B cell (primary cell): ENCODE measurements at regions of chr9 and their contacts with region 1.

Region 1: DNA sequence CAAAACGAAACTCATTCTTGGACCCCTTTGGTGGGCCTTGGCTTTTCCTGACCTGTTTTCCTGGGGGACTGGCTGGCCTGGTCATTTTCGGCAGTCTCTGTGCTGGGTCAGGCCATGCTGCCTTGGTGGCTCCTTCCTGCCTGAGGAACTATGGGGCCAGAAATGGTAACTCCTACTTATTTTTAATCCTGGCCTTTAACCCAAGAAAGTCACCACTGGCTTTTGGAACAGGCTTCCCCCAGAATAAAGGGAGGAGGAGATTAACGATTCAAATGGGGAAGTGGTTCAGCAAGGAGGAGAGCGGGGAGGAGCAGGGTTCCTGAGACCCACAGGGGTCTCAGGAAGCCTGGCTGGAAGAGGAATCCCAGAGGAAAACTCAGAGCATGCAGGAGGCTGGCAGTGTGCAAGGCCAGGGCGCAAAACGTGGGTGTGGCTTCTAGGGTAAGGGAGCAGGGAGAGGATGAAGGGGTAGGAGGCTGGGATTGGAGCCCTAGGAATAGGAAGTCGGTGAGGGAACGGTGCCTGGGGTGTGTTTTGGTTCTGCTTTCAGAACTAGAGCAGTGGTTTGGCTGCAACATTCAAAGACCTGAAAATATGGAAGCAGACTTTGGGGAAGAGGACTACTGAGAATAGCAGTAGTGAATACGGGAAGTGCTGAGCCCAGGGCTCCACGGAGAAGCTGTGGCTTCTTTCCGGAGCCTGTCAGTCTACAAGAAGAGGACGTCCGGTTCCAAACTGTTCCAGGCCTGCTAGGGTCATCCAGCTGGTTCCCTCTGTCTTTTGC is 271.1 kb upstream of the KLF4 start:
- DNase-seq: no peak
- ATAC-seq: no peak
- H3K4me3 ChIP-seq: no peak overlapping the region
- H3K4me3 Mint-ChIP-seq: no peak overlapping the region
- H3K27ac ChIP-seq: no peak overlapping the region
- H3K27ac Mint-ChIP-seq: no peak overlapping the region
- H3K4me1 ChIP-seq: no peaks in the 10 kb centered on the region
- H3K4me1 Mint-ChIP-seq: peaks cover 4% of the 10 kb centered on the region
- H3K27me3 ChIP-seq: peaks cover 0 to under 1% (median 0%) of the 10 kb centered on the region in 4 experiments
- H3K27me3 Mint-ChIP-seq: peaks cover 5% of the 10 kb centered on the region
- CTCF ChIP-seq: no peak

Region 2: GRCh38 chr9:107826966-107827703 is 66.5 kb after region 1 on chr9:
- CTCF ChIA-PET with region 1: no interaction called
- POLR2A ChIA-PET with region 1: no interaction called
- intact Hi-C with region 1: loop called (anchors 10 kb)
- DNase-seq: no peak
- ATAC-seq: no peak
- H3K4me3 ChIP-seq: no peak overlapping the region
- H3K4me3 Mint-ChIP-seq: no peak overlapping the region
- H3K27ac ChIP-seq: no peak overlapping the region
- H3K27ac Mint-ChIP-seq: no peak overlapping the region
- H3K4me1 ChIP-seq: no peaks in the 10 kb centered on the region
- H3K4me1 Mint-ChIP-seq: no peaks in the 10 kb centered on the region
- H3K27me3 ChIP-seq: no peaks in the 10 kb centered on the region
- H3K27me3 Mint-ChIP-seq: peaks cover 6% of the 10 kb centered on the region
- CTCF ChIP-seq: no peak